Calu3 (cell line): ENCODE measurements at regions of chr18 and their contacts with region 1.

Region 1: DNA sequence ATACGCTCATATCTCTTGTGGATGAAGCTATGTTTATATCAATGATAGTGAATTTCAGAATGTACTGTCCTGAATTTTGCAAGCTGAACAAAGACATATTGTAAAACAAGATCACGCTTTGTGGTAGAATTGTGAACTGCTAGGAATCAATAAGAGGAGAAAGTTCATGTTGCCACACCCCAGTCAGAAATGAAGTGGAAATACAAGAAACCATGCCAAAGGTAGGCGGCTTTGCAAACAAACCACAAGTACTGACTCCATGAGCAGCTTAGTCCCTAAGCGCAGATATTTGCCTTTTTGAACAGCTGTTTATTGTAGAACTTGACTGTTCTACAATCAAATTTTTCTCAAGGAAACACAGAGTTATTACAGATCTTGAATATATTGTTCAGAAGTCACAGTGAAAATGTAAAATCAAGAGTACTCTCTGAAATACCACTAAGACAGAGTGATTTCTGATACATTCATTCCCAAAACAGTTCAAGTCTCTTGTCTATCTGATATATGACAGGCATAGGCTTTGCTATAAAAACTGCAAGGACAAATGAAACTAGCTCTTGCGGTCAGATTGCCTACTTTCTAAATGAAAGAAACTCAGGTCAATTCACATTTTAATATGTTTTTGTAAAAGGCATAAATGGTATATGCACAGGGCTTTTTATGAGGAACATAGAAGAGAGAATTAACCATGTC is 120.9 kb upstream of the CDH19 start:
- DNase-seq: peak; percentile 71
- H3K4me3 Mint-ChIP-seq: peak overlapping the region; percentile 30
- H3K27ac Mint-ChIP-seq: peak overlapping the region; percentile 92
- H3K4me1 Mint-ChIP-seq: peaks cover 31% of the 10 kb centered on the region
- H3K27me3 Mint-ChIP-seq: no peaks in the 10 kb centered on the region
- CTCF ChIP-seq: peak; percentile 15

Region 2: GRCh38 chr18:66511810-66512209 is 213.0 kb before region 1 on chr18:
- CTCF ChIA-PET with region 1: no interaction called
- intact Hi-C with region 1: loop called (anchors 5 kb)
- DNase-seq: peak; percentile 24
- H3K4me3 Mint-ChIP-seq: peak overlapping the region; percentile 1
- H3K27ac Mint-ChIP-seq: peak overlapping the region; percentile 90
- H3K4me1 Mint-ChIP-seq: peaks cover 43% of the 10 kb centered on the region
- H3K27me3 Mint-ChIP-seq: no peaks in the 10 kb centered on the region
- CTCF ChIP-seq: no peak

Region 3: DNA sequence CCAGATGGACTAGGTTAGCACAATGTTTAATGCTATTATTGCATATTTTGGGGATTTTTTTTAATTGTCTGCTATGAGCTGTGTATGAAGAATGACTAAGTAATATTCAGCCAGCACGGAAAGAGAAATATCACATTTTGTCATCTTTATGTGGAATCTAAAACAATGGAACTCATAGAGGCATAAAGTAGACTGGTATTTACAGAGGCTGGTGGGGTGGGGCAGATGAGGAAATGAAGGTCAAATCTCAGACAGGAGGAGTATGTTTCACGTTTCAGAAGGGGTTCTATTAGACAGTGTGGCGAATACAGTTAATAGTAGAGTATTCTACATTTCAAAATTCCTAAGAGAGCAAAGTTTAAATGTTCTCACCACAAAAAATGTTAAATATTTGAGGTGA is 125.6 kb before region 1 on chr18:
- CTCF ChIA-PET with region 1: no interaction called
- intact Hi-C with region 1: loop called (anchors 2 kb)
- DNase-seq: peak; percentile 77
- H3K4me3 Mint-ChIP-seq: peak overlapping the region; percentile 14
- H3K27ac Mint-ChIP-seq: peak overlapping the region; percentile 95
- H3K4me1 Mint-ChIP-seq: peaks cover 23% of the 10 kb centered on the region
- H3K27me3 Mint-ChIP-seq: no peaks in the 10 kb centered on the region
- CTCF ChIP-seq: no peak

Region 4: DNA sequence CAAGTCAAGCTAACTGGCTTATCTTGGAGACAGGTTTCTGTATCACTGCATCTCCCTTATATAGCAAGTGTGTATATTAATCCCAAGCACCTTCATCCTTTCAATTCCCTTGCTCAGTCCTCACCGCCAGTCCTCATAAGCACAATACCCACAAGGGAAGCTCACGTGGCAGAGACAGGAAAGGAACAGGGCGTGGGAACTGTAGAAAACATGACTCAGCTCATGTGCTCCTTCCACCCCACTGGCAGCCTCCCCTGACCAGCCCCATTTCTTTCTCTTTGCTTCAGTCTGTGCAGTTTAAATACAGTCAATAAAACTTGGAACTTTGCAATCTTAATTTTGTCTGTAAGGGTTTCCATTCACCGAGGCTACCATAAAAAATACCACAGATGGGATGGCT is 84.4 kb before region 1 on chr18:
- CTCF ChIA-PET with region 1: no interaction called
- intact Hi-C with region 1: no loop called
- DNase-seq: no peak
- H3K4me3 Mint-ChIP-seq: no peak overlapping the region
- H3K27ac Mint-ChIP-seq: no peak overlapping the region
- H3K4me1 Mint-ChIP-seq: peaks cover 26% of the 10 kb centered on the region
- H3K27me3 Mint-ChIP-seq: no peaks in the 10 kb centered on the region
- CTCF ChIP-seq: no peak